ENCODE measurements at regions of chr22 and their contacts with region 1.

Region 1: GRCh38 chr22:50620593-50621355 is 7.2 kb downstream of the ARSA start:
- H3K4me3 Mint-ChIP-seq: peak overlapping the region; percentile 69
- H3K27ac Mint-ChIP-seq: peak overlapping the region; percentile 81
- H3K4me1 Mint-ChIP-seq: peaks cover 34% of the 10 kb centered on the region
- H3K27me3 Mint-ChIP-seq: peaks cover 14% of the 10 kb centered on the region

Region 2: DNA sequence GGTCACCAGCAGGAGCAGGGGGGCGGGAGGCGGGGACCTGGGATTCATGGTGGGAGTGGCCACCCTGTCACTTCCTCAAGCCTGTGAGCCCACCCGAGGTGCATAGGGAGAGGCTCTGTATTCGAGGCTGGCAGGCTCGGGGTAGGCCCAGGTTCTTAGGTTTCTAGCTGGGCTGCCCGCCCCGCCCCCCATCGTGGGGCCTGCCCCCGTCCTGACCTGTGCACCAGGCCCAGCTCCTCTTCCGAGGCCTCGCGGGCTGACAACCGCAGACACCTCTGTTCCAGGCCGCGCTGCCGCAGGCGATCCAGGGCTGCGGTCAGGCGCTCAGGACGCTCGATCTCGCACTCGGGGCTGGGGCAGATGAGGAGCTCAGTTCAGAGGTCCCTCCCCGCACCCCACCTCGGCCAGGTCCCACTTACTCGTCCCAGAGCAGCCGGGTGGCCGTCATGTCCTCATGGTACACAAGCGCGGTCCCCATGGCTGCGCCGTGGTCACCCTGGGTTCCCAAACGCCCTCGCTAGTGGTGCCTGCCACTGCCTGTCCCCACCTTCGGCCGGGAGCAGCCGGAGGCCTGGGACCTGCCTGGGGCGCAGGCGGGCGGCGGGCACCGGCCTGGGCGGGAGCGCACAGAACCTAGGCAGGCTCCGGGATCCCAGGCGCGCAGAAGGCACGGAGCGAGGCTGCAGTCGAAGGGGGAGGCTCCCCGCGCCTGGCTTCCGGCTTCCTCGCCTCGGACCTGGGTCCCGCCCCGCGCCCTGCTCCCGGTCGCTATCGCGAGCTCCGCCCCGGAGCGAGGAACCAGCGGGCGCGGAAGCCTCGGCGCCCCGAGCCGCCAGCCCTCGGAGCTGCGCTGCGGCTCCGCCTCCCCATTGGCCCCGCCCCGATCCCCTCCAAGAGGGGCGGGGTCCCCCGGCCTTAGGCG is 370.0 kb before region 1 on chr22 and contains the start of gene HDAC10:
- intact Hi-C with region 1: loop called (anchors 5 kb)
- H3K4me3 Mint-ChIP-seq: peak within 1 kb of the TSS; percentile 83
- H3K27ac Mint-ChIP-seq: peak within 1 kb of the TSS; percentile 61
- H3K4me1 Mint-ChIP-seq: peaks cover 45% of the 10 kb centered on the region
- H3K27me3 Mint-ChIP-seq: no peaks in the 10 kb centered on the region

Region 3: DNA sequence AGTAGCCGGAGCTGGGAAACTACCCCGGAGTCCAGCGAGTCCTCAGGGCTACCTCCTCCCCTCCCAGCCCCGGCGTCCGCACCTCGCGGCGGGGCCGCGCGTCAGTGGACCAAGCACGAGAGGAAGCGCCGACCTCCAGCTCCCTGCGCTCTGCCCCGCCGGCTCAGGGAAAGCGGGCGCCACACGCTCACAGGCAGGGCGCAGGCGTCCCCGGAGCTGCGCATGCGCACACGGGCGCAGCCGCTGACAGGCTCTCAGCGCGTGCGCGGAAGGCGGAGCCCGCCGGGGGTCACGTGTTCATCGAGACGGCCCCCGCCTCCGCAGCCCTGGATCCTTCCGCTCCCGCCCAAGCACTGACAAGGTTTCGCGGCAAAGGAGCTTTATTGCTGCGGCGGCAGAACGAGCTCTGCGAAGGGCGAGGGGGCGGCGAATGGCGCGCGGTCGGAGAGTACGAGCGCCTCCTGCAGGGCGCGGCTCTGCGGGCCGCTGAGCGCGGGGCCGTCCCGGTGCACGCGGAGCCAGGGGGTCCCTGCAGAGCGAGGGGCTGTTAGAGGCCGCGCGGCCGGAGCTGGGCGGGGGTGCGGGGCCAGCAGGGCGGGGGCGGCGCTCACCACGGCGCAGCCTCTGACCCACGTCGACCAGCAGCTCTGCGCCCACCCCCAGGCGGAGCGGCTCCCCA is 95.2 kb before region 1 on chr22 and contains the start of gene SCO2:
- intact Hi-C with region 1: loop called (anchors 5 kb)
- H3K4me3 Mint-ChIP-seq: peak within 1 kb of the TSS; percentile 97
- H3K27ac Mint-ChIP-seq: peak within 1 kb of the TSS; percentile 95
- H3K4me1 Mint-ChIP-seq: peaks cover 52% of the 10 kb centered on the region
- H3K27me3 Mint-ChIP-seq: no peaks in the 10 kb centered on the region

Region 4: DNA sequence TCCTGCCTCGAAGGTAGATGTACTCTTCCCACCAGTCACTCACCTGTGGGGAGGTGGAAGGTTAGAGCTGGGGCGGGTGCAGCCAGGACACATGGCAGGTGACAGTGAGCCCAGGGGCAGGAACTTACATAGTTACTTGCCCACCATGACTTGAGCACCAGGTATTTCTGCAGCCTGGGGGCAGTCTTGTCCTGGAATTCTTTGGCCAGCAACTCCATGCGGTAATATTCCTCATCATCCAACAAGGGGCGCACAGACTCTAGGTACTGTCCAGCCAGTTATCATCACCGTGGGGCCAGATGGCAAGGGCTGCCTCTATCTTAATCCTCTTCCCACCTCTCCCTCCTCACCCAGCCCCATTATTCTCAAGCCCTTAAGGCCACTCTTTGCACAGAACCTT is 44.7 kb before region 1 on chr22:
- intact Hi-C with region 1: loop called (anchors 2 kb)
- H3K4me3 Mint-ChIP-seq: no peak overlapping the region
- H3K27ac Mint-ChIP-seq: no peak overlapping the region
- H3K4me1 Mint-ChIP-seq: peaks cover 33% of the 10 kb centered on the region
- H3K27me3 Mint-ChIP-seq: peaks cover 9% of the 10 kb centered on the region